ENCODE measurements at regions of chr20 and their contacts with region 1.

Region 1: GRCh38 chr20:25057234-25058050 is 497 bp downstream of the ACSS1 start:
- DNase-seq: peak; percentile 76 to 88 (median 85)
- H3K4me3 ChIP-seq: peak overlapping the region; percentile 90
- H3K4me3 Mint-ChIP-seq: peak overlapping the region; percentile 85 to 95 (median 89)
- H3K27ac ChIP-seq: peak overlapping the region; percentile 86
- H3K27ac Mint-ChIP-seq: peak overlapping the region; percentile 90 to 97 (median 94)
- H3K4me1 ChIP-seq: peaks cover 53% of the 10 kb centered on the region
- H3K4me1 Mint-ChIP-seq: peaks cover 49 to 56% (median 51%) of the 10 kb centered on the region in 3 donors
- H3K27me3 ChIP-seq: no peaks in the 10 kb centered on the region
- H3K27me3 Mint-ChIP-seq: no peaks in the 10 kb centered on the region

Region 2: DNA sequence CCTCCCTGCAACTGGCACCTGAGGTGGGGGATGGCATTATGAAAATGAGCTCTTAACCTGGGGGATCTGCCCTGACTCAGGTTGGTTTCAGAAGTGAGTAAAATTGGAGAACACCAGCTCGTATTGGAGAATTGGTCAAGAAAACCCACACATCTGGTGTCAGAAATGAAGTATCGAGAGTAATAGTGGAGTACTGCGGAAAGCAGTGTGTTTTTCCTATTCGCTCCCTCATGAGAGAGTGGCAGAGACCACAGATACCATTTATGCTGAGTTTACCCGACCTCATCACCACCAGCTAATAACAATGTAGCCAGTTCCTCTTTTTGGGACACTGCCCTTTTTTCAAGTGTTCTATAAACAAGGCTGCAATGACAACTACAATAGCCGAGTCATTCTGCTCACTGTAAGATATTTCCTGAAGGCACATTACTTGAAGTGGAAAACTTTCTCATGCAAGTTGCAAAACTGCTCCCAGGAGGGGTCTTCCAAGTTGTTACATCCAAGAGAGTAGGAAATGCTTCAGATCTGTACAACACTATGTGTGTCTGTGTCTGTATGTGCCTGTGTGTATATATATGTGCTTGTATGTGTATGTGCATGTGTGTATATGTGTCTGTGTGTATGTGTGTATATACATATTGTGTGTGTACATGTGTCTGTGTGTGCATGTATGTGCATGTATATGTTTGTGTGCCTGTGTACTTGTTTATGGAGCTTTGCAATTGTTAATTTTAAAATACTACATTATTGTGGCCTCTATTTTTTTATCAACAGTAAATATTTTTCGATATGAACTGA is 214.3 kb before region 1 on chr20:
- CTCF ChIA-PET with region 1: no interaction called
- POLR2A ChIA-PET with region 1: no interaction called
- DNase-seq: no peak
- H3K4me3 ChIP-seq: no peak overlapping the region
- H3K4me3 Mint-ChIP-seq: no peak overlapping the region
- H3K27ac ChIP-seq: no peak overlapping the region
- H3K27ac Mint-ChIP-seq: no peak overlapping the region
- H3K4me1 ChIP-seq: no peaks in the 10 kb centered on the region
- H3K4me1 Mint-ChIP-seq: no peaks in the 10 kb centered on the region
- H3K27me3 ChIP-seq: no peaks in the 10 kb centered on the region
- H3K27me3 Mint-ChIP-seq: peaks cover 5 to 31% of the 10 kb centered on the region in 2 donors

Region 3: GRCh38 chr20:24863356-24863755 is 194.1 kb before region 1 on chr20:
- CTCF ChIA-PET with region 1: no interaction called
- POLR2A ChIA-PET with region 1: no interaction called
- DNase-seq: no peak
- H3K4me3 ChIP-seq: no peak overlapping the region
- H3K4me3 Mint-ChIP-seq: no peak overlapping the region
- H3K27ac ChIP-seq: no peak overlapping the region
- H3K27ac Mint-ChIP-seq: no peak overlapping the region
- H3K4me1 ChIP-seq: no peaks in the 10 kb centered on the region
- H3K4me1 Mint-ChIP-seq: peaks cover 3 to 15% (median 5%) of the 10 kb centered on the region in 3 donors
- H3K27me3 ChIP-seq: no peaks in the 10 kb centered on the region
- H3K27me3 Mint-ChIP-seq: peaks cover 13 to 15% of the 10 kb centered on the region in 2 donors

Region 4: GRCh38 chr20:24992487-24993205 is 64.8 kb before region 1 on chr20 and contains the start of gene APMAP:
- CTCF ChIA-PET with region 1: interaction called, 147 read pairs
- POLR2A ChIA-PET with region 1: interaction called, 26 read pairs
- DNase-seq: peak; percentile 94 to 97 (median 95)
- H3K4me3 ChIP-seq: peak within 1 kb of the TSS; percentile 84
- H3K4me3 Mint-ChIP-seq: peak within 1 kb of the TSS; percentile 94 to 99 (median 96)
- H3K27ac ChIP-seq: peak within 1 kb of the TSS; percentile 95
- H3K27ac Mint-ChIP-seq: peak within 1 kb of the TSS; percentile 97 to 100 (median 98)
- H3K4me1 ChIP-seq: peaks cover 60% of the 10 kb centered on the region
- H3K4me1 Mint-ChIP-seq: peaks cover 60 to 71% (median 67%) of the 10 kb centered on the region in 3 donors
- H3K27me3 ChIP-seq: no peaks in the 10 kb centered on the region
- H3K27me3 Mint-ChIP-seq: peaks cover 0 to 6% of the 10 kb centered on the region in 2 donors
- total RNA-seq, gene APMAP: 82.5 to 83.6 TPM

Region 5: GRCh38 chr20:25025986-25026605 is 31.3 kb before region 1 on chr20:
- CTCF ChIA-PET with region 1: no interaction called
- POLR2A ChIA-PET with region 1: no interaction called
- DNase-seq: no peak
- H3K4me3 ChIP-seq: no peak overlapping the region
- H3K4me3 Mint-ChIP-seq: no peak overlapping the region
- H3K27ac ChIP-seq: no peak overlapping the region
- H3K27ac Mint-ChIP-seq: peak overlapping the region in 6 of 8 donors; percentile 14 to 80 (median 42)
- H3K4me1 ChIP-seq: no peaks in the 10 kb centered on the region
- H3K4me1 Mint-ChIP-seq: peaks cover 29 to 70% (median 46%) of the 10 kb centered on the region in 3 donors
- H3K27me3 ChIP-seq: no peaks in the 10 kb centered on the region
- H3K27me3 Mint-ChIP-seq: no peaks in the 10 kb centered on the region

Region 6: DNA sequence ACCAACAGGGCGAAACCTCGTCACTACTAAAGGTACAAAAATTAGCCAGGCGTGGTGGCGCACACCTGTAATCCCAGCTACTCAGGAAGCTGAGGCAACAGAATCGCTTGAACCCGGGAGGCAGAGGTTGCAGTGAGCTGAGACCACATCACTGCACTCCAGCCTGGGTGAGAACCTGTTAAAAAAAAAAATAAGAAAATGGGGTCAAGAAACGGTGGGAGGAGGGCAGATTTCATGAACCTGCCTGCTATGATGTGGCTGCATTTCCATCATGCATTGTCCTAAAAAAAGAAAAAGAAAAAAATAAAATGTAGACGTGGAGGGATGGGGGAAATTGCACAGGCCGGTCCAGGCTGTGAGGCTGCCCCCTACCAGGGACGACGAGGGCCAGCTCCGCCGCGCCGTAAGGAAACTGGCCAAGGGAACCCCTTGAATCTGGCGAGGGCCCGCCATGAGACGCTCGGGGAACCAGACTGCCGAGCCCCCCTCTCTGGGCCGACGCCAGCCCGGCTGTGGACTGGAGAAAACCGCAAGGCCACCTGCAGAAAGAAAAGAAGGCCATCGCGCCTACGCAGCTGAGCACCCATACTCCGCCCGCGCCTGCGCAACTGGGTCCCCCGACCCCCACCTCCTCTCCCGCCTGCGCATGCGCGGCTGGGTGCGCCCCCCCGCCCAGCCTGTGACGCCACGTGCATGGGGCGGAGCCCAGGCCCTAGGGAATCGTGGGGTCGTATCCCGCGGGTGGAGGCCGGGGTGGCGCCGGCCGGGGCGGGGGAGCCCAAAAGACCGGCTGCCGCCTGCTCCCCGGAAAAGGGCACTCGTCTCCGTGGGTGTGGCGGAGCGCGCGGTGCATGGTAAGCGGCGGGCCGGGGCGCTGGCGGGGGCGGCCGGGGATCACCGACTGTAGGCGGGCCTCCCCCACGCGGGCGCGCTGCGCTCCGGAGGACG is 137.8 kb after region 1 on chr20 and contains the start of gene ENTPD6:
- CTCF ChIA-PET with region 1: no interaction called
- POLR2A ChIA-PET with region 1: interaction called, 16 read pairs
- DNase-seq: peak; percentile 92 to 97 (median 94)
- H3K4me3 ChIP-seq: peak within 1 kb of the TSS; percentile 75
- H3K4me3 Mint-ChIP-seq: peak within 1 kb of the TSS; percentile 82 to 92 (median 88)
- H3K27ac ChIP-seq: peak within 1 kb of the TSS; percentile 73
- H3K27ac Mint-ChIP-seq: peak within 1 kb of the TSS; percentile 88 to 97 (median 94)
- H3K4me1 ChIP-seq: peaks cover 24% of the 10 kb centered on the region
- H3K4me1 Mint-ChIP-seq: peaks cover 39 to 41% (median 39%) of the 10 kb centered on the region in 3 donors
- H3K27me3 ChIP-seq: peaks cover 5% of the 10 kb centered on the region
- H3K27me3 Mint-ChIP-seq: peaks cover 0 to 1% of the 10 kb centered on the region in 2 donors
- total RNA-seq, gene ENTPD6: 44.2 to 47.0 TPM

Region 7: DNA sequence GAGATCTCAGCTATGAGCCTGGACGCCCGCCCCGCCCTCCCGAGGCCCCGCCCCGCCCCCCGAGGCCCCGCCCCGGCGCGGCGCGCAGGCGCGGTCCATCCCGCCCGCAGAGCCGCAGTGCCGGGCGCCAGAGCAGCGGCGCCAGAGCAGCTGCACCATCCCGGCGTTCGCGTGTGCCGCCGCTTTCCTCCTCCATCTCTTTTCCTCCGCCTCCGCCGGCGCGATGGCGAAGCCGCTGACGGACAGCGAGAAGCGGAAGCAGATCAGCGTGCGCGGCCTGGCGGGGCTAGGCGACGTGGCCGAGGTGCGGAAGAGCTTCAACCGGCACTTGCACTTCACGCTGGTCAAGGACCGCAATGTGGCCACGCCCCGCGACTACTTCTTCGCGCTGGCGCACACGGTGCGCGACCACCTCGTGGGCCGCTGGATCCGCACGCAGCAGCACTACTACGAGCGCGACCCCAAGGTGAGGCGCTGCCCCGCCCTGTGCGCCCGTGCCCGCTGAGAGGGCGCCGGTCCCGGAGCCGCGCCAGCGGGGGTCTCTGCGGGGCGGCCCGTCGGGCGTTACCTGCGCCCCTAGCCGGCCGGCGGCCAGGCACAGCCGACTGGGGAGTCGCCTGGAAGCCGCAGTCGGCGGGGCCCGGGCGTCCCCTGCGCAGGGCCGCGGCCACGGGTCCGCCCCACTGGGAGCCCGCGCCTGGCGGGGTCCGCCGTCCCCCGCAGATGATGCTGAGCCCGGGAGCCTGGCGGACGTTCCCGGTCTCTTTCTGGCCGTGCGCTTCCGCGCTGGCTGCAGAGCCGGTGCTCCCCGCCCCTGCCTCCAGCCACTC is 190.7 kb after region 1 on chr20 and contains the start of gene PYGB:
- CTCF ChIA-PET with region 1: no interaction called
- POLR2A ChIA-PET with region 1: interaction called, 10 read pairs
- DNase-seq: peak; percentile 66 to 81 (median 71)
- H3K4me3 ChIP-seq: peak within 1 kb of the TSS; percentile 81
- H3K4me3 Mint-ChIP-seq: peak within 1 kb of the TSS; percentile 93 to 97 (median 95)
- H3K27ac ChIP-seq: peak within 1 kb of the TSS; percentile 51
- H3K27ac Mint-ChIP-seq: peak within 1 kb of the TSS; percentile 70 to 93 (median 89)
- H3K4me1 ChIP-seq: peaks cover 25% of the 10 kb centered on the region
- H3K4me1 Mint-ChIP-seq: peaks cover 41 to 55% (median 54%) of the 10 kb centered on the region in 3 donors
- H3K27me3 ChIP-seq: no peaks in the 10 kb centered on the region
- H3K27me3 Mint-ChIP-seq: peaks cover 0 to 7% of the 10 kb centered on the region in 2 donors
- total RNA-seq, gene PYGB: 32.5 to 35.7 TPM